ENCODE measurements at regions of chr22 and their contacts with region 1.

Region 1: GRCh38 chr22:24768537-24769374 is 5.8 kb downstream of the PIWIL3 start:
- DNase-seq: peak; percentile 49
- H3K4me3 ChIP-seq: no peak overlapping the region
- H3K27ac ChIP-seq: no peak overlapping the region
- H3K4me1 ChIP-seq: no peaks in the 10 kb centered on the region
- H3K27me3 ChIP-seq: peaks cover 0 to 3% of the 10 kb centered on the region in 2 experiments
- CTCF ChIP-seq: peak; percentile 60 to 67
- POLR2A ChIP-seq: no peak

Region 2: DNA sequence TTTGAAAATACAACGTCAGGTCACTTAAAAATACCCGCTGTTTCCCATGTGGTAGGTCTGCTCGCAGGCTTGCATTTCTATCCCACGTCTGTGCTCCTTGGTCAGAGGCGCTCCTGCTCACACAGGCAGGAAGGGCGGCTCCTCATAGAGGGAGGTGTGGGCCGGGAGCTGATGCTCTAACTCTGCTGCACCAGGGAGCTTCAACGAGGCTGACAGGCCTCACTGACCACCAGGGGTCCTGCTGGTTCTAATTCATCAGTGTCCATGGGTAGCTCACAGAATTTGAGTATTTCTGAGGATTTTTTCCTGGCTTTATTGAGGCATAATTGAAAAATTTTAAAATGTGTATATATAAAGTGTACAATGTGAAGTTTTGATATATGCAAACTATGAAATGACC is 62.7 kb before region 1 on chr22:
- CTCF ChIA-PET with region 1: interaction called, 22 read pairs
- POLR2A ChIA-PET with region 1: no interaction called
- dilution Hi-C with region 1: no loop called
- intact Hi-C with region 1: no loop called
- DNase-seq: peak; percentile 40
- H3K4me3 ChIP-seq: no peak overlapping the region
- H3K27ac ChIP-seq: no peak overlapping the region
- H3K4me1 ChIP-seq: no peaks in the 10 kb centered on the region
- H3K27me3 ChIP-seq: peaks cover 7 to 8% of the 10 kb centered on the region in 2 experiments
- CTCF ChIP-seq: peak; percentile 38 to 62
- POLR2A ChIP-seq: no peak

Region 3: GRCh38 chr22:24758164-24758799 is 10.5 kb before region 1 on chr22:
- CTCF ChIA-PET with region 1: interaction called, 73 read pairs
- POLR2A ChIA-PET with region 1: no interaction called
- dilution Hi-C with region 1: no loop called
- intact Hi-C with region 1: no loop called
- DNase-seq: peak; percentile 70
- H3K4me3 ChIP-seq: no peak overlapping the region
- H3K27ac ChIP-seq: no peak overlapping the region
- H3K4me1 ChIP-seq: peaks cover 25% of the 10 kb centered on the region
- H3K27me3 ChIP-seq: peaks cover 2 to 7% of the 10 kb centered on the region in 2 experiments
- CTCF ChIP-seq: peak; percentile 60 to 70
- POLR2A ChIP-seq: no peak

Region 4: GRCh38 chr22:24789516-24789915 is 20.8 kb after region 1 on chr22:
- CTCF ChIA-PET with region 1: interaction called, 13 read pairs
- POLR2A ChIA-PET with region 1: no interaction called
- dilution Hi-C with region 1: no loop called
- intact Hi-C with region 1: no loop called
- DNase-seq: no peak
- H3K4me3 ChIP-seq: no peak overlapping the region
- H3K27ac ChIP-seq: no peak overlapping the region
- H3K4me1 ChIP-seq: no peaks in the 10 kb centered on the region
- H3K27me3 ChIP-seq: peaks cover 0 to 1% of the 10 kb centered on the region in 2 experiments
- CTCF ChIP-seq: no peak
- POLR2A ChIP-seq: no peak

Region 5: GRCh38 chr22:24834845-24835570 is 66.3 kb after region 1 on chr22:
- CTCF ChIA-PET with region 1: interaction called, 11 read pairs
- POLR2A ChIA-PET with region 1: no interaction called
- dilution Hi-C with region 1: no loop called
- intact Hi-C with region 1: loop called (anchors 5 kb)
- DNase-seq: peak; percentile 26
- H3K4me3 ChIP-seq: no peak overlapping the region
- H3K27ac ChIP-seq: no peak overlapping the region
- H3K4me1 ChIP-seq: no peaks in the 10 kb centered on the region
- H3K27me3 ChIP-seq: peaks cover 2 to 3% of the 10 kb centered on the region in 2 experiments
- CTCF ChIP-seq: peak; percentile 33 to 48
- POLR2A ChIP-seq: no peak

Region 6: GRCh38 chr22:24845041-24845898 is 76.5 kb after region 1 on chr22:
- CTCF ChIA-PET with region 1: interaction called, 87 read pairs
- POLR2A ChIA-PET with region 1: no interaction called
- dilution Hi-C with region 1: no loop called
- intact Hi-C with region 1: loop called (anchors 1 kb)
- DNase-seq: no peak
- H3K4me3 ChIP-seq: no peak overlapping the region
- H3K27ac ChIP-seq: no peak overlapping the region
- H3K4me1 ChIP-seq: no peaks in the 10 kb centered on the region
- H3K27me3 ChIP-seq: no peaks in the 10 kb centered on the region
- CTCF ChIP-seq: no peak
- POLR2A ChIP-seq: no peak

Region 7: DNA sequence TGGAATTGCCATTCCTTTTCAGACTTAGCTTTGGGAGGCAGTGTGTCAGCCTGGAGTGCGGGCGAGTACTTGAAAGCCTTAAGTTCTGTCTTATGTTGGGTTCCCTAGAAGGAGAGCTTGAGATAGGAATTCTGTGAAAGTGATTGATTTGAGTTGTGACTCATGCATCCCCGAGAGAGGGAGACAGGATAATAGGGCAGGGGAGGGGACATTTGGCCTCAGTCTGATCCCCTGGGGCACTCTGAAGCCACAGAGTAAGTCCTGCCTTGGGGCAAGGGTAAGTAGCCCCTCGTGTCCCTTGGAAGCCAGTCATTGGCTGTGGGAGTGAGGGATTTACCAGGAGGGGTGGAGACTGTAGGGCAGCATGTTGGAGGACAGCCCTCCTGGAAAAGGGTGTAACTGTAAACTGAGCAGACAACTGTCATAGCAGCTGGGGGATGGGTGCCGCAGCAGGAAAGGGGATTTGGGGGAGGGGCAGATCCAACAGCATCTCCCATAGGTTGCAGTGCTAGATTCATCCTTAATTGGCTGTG is 227.7 kb after region 1 on chr22:
- CTCF ChIA-PET with region 1: no interaction called
- POLR2A ChIA-PET with region 1: no interaction called
- dilution Hi-C with region 1: no loop called
- intact Hi-C with region 1: no loop called
- DNase-seq: peak; percentile 48
- H3K4me3 ChIP-seq: no peak overlapping the region
- H3K27ac ChIP-seq: peak overlapping the region; percentile 49
- H3K4me1 ChIP-seq: peaks cover 30% of the 10 kb centered on the region
- H3K27me3 ChIP-seq: no peaks in the 10 kb centered on the region
- CTCF ChIP-seq: no peak
- POLR2A ChIP-seq: no peak

Region 8: GRCh38 chr22:25048659-25049647 is 280.2 kb after region 1 on chr22:
- CTCF ChIA-PET with region 1: interaction called, 12 read pairs
- POLR2A ChIA-PET with region 1: no interaction called
- dilution Hi-C with region 1: no loop called
- intact Hi-C with region 1: loop called (anchors 5 kb)
- DNase-seq: peak; percentile 63
- H3K4me3 ChIP-seq: no peak overlapping the region
- H3K27ac ChIP-seq: no peak overlapping the region
- H3K4me1 ChIP-seq: peaks cover 4% of the 10 kb centered on the region
- H3K27me3 ChIP-seq: no peaks in the 10 kb centered on the region
- CTCF ChIP-seq: peak; percentile 82 to 88
- POLR2A ChIP-seq: no peak

Measured in endothelial cell of umbilical vein (primary cell).